ENCODE measurements at regions of chr4 and their contacts with region 1.

Region 1: GRCh38 chr4:93561842-93562241 is 266.7 kb upstream of the ATOH1 start:
- DNase-seq: no peak
- CTCF ChIP-seq: no peak

Region 2: DNA sequence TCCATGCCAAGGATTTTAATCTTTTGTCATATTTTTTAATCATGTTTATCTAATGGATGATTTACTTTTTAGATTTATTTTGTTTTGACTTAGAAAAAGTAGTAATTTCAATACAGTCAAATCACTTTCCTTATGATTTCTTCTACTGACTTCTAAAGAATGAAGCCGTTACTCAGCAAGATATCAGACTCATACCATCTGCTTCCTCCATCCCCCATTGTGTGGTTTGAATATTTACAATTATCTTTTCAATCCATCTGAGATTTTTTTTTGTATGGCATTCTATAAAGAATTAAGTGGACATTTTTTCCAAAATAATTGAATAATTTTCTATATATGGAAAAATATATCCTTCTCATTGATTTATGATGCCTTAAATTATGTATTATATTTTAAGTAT is 298.7 kb before region 1 on chr4:
- CTCF ChIA-PET with region 1: no interaction called
- POLR2A ChIA-PET with region 1: interaction called, 11 read pairs
- DNase-seq: no peak
- CTCF ChIP-seq: no peak